GM12878 (cell line): ENCODE measurements at regions of chr17 and their contacts with region 1.

Region 1: DNA sequence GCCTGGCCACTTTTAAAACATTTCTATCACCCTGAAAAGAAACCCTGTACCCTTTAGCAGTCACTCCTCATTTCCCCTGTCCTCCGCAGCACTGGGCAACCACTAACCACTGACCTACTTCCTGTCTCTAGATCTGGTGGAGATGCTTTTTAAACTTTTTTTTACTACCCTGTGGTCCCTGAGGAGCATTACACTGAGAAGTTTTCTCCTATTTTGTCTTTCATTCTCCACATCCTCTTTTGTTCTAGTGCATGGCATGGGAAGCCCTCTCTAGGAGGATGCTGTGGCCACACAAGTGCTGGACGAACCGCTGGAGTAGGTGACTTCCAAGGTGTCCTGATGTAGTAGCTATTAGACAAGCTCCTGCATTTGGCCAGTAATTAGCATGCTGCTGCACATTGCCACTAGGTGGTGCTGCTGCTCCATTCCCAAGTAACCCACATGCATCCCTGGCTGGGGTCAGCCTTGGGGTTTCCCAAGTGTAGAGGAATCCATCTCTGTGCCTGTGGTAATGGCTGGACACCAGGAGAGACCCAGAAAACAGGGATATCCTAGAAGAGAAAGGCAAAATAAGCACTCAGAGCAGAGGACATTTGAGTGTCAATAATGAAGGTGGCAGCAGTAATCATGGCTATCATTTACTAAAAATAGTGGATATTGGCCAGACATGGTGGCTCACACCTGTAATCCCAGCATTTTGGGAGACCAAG is 143.8 kb upstream of the CRHR1 start:
- DNase-seq: peak; percentile 34
- ATAC-seq: peak; percentile 96
- H3K4me3 ChIP-seq: no peak overlapping the region
- H3K27ac ChIP-seq: no peak overlapping the region
- H3K4me1 ChIP-seq: no peaks in the 10 kb centered on the region; the same call in 1 of the 2 replicates
- H3K27me3 ChIP-seq: no peaks in the 10 kb centered on the region
- CTCF ChIP-seq: peak; percentile 95 to 99 (median 96)
- EP300 ChIP-seq: no peak
- POLR2A ChIP-seq: no peak
- RAD21 ChIP-seq: peak; percentile 90

Region 2: GRCh38 chr17:45197555-45198334 is 442.6 kb before region 1 on chr17:
- CTCF ChIA-PET with region 1: no interaction called
- POLR2A ChIA-PET with region 1: no interaction called
- RAD21 ChIA-PET with region 1: no interaction called
- SMC1A ChIA-PET with region 1: no interaction called
- in situ Hi-C with region 1: no loop called
- intact Hi-C with region 1: no loop called
- DNase-seq: peak; percentile 54
- ATAC-seq: peak; percentile 100
- H3K4me3 ChIP-seq: no peak overlapping the region
- H3K27ac ChIP-seq: no peak overlapping the region
- H3K4me1 ChIP-seq: peaks cover 8% of the 10 kb centered on the region
- H3K27me3 ChIP-seq: no peaks in the 10 kb centered on the region
- CTCF ChIP-seq: peak; percentile 99 to 100 (median 99)
- EP300 ChIP-seq: no peak
- POLR2A ChIP-seq: no peak
- RAD21 ChIP-seq: peak; percentile 97

Region 3: GRCh38 chr17:45573924-45574770 is 66.1 kb before region 1 on chr17:
- CTCF ChIA-PET with region 1: no interaction called
- POLR2A ChIA-PET with region 1: no interaction called
- RAD21 ChIA-PET with region 1: no interaction called
- SMC1A ChIA-PET with region 1: no interaction called
- in situ Hi-C with region 1: no loop called
- intact Hi-C with region 1: no loop called
- DNase-seq: no peak
- ATAC-seq: peak; percentile 52
- H3K4me3 ChIP-seq: no peak overlapping the region
- H3K27ac ChIP-seq: no peak overlapping the region
- H3K4me1 ChIP-seq: peaks cover 27% of the 10 kb centered on the region
- H3K27me3 ChIP-seq: no peaks in the 10 kb centered on the region
- CTCF ChIP-seq: no peak
- EP300 ChIP-seq: no peak
- POLR2A ChIP-seq: no peak
- RAD21 ChIP-seq: no peak

Region 4: GRCh38 chr17:45828628-45829027 is 188.3 kb after region 1 on chr17:
- CTCF ChIA-PET with region 1: interaction called, 48 read pairs
- POLR2A ChIA-PET with region 1: no interaction called
- RAD21 ChIA-PET with region 1: interaction called, 32 read pairs
- SMC1A ChIA-PET with region 1: interaction called, 19 read pairs
- in situ Hi-C with region 1: loop called (anchors 5 kb)
- intact Hi-C with region 1: loop called (anchors 1 kb)
- DNase-seq: no peak
- ATAC-seq: no peak
- H3K4me3 ChIP-seq: no peak overlapping the region
- H3K27ac ChIP-seq: no peak overlapping the region
- H3K4me1 ChIP-seq: no peaks in the 10 kb centered on the region
- H3K27me3 ChIP-seq: peaks cover 0 to 1% of the 10 kb centered on the region in 2 experiments; a peak in 2 of 4 replicates
- CTCF ChIP-seq: no peak
- EP300 ChIP-seq: no peak
- POLR2A ChIP-seq: no peak
- RAD21 ChIP-seq: no peak

Region 5: DNA sequence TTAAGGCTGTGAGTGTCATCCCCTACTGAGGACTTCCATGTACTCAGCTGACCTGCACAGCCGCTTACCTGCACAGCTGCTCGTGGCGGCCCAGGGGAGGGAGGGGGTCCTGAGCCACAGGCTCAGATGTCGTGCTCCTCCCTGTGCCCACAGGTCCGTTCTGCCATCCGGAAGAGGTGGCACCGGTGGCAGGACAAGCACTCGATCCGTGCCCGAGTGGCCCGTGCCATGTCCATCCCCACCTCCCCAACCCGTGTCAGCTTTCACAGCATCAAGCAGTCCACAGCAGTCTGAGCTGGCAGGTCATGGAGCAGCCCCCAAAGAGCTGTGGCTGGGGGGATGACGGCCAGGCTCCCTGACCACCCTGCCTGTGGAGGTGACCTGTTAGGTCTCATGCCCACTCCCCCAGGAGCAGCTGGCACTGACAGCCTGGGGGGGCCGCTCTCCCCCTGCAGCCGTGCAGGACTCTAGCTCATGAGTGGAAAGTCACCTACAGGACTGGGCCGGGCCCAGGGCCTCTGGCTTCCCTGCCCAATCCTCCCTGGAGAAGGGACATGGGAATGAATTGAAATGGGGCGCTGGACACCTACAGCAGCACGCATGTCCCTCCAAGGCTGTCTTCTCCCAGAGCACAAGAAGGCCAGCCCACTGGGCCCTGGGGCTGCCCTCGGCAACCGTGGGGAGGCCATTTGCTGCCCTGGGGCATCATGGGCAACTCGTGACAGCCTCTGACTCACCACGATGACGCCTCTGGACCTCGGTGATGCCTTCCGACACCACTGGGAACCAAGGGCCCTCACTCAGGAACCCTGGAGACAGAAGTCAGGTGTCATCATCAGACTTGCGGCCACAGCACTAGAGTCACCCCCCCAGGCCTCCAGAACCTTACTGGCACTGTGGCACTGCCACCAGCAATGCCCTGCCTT is 194.4 kb after region 1 on chr17:
- CTCF ChIA-PET with region 1: interaction called, 48 read pairs
- POLR2A ChIA-PET with region 1: no interaction called
- RAD21 ChIA-PET with region 1: interaction called, 32 read pairs
- SMC1A ChIA-PET with region 1: interaction called, 19 read pairs
- in situ Hi-C with region 1: loop called (anchors 5 kb)
- intact Hi-C with region 1: loop called (anchors 1 kb)
- DNase-seq: no peak
- ATAC-seq: no peak
- H3K4me3 ChIP-seq: no peak overlapping the region
- H3K27ac ChIP-seq: no peak overlapping the region
- H3K4me1 ChIP-seq: no peaks in the 10 kb centered on the region
- H3K27me3 ChIP-seq: no peaks in the 10 kb centered on the region; a peak in 2 of 4 replicates
- CTCF ChIP-seq: no peak
- EP300 ChIP-seq: no peak
- POLR2A ChIP-seq: no peak
- RAD21 ChIP-seq: no peak

Region 6: DNA sequence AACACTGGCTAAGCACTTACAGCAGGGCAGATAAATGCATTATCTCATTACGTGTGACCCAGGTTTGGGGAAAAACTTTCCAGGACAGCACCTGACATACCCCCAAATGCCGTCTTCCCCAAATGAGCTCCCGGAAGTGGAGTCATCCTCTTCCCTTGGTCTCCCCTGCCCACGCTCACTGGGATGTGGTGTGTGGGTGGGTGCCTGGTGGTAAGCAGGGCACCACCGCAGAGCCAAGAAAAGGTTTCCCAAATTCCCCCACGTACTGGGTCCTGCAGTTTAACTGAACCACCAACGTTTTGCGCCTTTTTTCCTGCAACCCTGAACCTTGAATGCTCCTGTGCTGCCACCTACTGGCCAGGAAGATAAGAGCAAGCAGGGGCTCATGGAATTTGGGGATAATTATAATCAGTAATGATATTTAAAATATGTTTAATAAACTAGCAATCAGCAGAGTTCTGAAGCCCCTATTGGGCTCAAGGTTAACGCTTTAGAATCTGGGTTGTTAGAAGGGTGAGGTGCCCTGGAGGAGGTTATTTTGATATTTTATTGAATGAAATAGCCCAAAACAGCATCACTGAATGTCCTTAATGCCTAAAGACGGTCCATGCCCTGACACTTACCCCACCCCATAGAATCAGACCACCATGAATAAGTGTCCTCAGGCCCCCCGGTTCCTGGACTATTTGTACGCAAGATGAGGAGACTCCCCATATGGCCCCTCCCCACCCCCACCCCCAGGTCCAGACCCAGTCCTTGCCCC is 212.4 kb after region 1 on chr17:
- CTCF ChIA-PET with region 1: interaction called, 15 read pairs
- POLR2A ChIA-PET with region 1: no interaction called
- RAD21 ChIA-PET with region 1: interaction called, 8 read pairs
- SMC1A ChIA-PET with region 1: no interaction called
- in situ Hi-C with region 1: no loop called
- intact Hi-C with region 1: loop called (anchors 1 kb)
- DNase-seq: no peak
- ATAC-seq: peak; percentile 55; the same call in 2 of the 3 replicates
- H3K4me3 ChIP-seq: no peak overlapping the region
- H3K27ac ChIP-seq: no peak overlapping the region
- H3K4me1 ChIP-seq: no peaks in the 10 kb centered on the region
- H3K27me3 ChIP-seq: no peaks in the 10 kb centered on the region; a peak in 1 of 4 replicates
- CTCF ChIP-seq: peak; percentile 80 to 89 (median 85)
- EP300 ChIP-seq: no peak
- POLR2A ChIP-seq: no peak
- RAD21 ChIP-seq: peak; percentile 80